Panc1 (cell line): ENCODE measurements at regions of chr22 and their contacts with region 1.

Region 1: DNA sequence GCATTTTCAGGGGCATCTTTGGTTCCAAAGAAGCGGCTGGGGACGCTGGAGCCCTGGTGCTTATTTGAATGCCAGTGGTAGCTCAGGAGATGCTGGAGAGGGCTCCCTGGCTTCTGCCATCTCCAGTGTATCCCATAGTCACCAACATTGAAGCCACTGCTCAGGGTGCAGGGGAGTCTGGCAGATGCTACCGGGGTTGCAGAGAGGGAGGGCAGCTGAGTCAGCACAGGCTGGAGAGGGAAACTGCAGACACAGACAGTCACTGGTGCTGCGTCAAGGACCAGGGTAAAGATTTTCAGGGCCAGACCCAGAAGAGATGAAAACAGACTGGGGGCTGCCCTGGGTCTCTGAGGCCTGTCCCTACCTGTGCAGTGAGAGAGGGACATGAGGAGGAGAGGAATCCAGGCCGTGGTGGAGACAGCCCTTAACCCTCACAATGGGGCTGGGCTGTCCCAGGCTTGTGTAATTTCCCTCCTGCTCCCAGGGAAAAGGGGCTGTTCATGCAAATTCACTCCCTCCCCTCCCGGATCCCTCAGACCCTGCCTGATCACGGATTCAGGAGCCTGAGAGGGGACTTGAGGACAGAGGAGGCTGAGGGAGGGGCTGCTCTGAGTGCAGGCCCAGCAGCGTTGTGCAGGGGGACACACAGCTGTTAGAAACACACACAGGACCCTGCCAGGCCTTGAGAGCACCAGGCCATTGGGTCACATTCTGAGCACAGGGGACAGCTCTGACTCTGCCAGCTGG is 126.9 kb upstream of the GRK3 start:
- DNase-seq: no peak
- ATAC-seq: no peak; the same call in 1 of the 2 replicates
- H3K4me3 ChIP-seq: no peak overlapping the region
- H3K27ac ChIP-seq: no peak overlapping the region
- H3K4me1 ChIP-seq: no peaks in the 10 kb centered on the region
- H3K27me3 ChIP-seq: no peaks in the 10 kb centered on the region
- CTCF ChIP-seq: no peak

Region 2: DNA sequence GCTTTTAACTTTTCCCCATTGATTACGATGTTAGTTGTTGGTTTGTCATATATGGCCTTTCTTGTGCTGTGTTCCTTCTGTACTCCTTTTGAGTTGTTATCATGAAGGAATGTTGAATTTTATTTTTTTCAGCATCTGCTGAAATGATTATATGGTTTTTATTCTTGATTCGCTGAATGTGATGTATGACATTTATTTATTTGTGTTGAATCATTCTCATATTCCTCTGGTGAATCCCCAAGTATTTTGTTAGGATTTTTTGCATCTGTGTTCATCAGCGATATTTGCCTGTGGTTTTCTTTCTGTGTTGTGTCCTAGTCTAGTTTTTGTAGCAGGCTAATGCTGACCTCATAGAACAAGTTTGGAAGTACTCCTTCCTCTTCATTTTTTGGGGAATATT is 756.4 kb before region 1 on chr22:
- CTCF ChIA-PET with region 1: no interaction called
- POLR2A ChIA-PET with region 1: no interaction called
- in situ Hi-C with region 1: no loop called
- intact Hi-C with region 1: no loop called
- DNase-seq: no peak
- ATAC-seq: no peak
- H3K4me3 ChIP-seq: no peak overlapping the region
- H3K27ac ChIP-seq: no peak overlapping the region
- H3K4me1 ChIP-seq: no peaks in the 10 kb centered on the region
- H3K27me3 ChIP-seq: no peaks in the 10 kb centered on the region
- CTCF ChIP-seq: no peak

Region 3: GRCh38 chr22:25525376-25525775 is 87.8 kb after region 1 on chr22:
- CTCF ChIA-PET with region 1: no interaction called
- POLR2A ChIA-PET with region 1: no interaction called
- in situ Hi-C with region 1: no loop called
- intact Hi-C with region 1: no loop called
- DNase-seq: no peak
- ATAC-seq: no peak
- H3K4me3 ChIP-seq: no peak overlapping the region
- H3K27ac ChIP-seq: no peak overlapping the region
- H3K4me1 ChIP-seq: no peaks in the 10 kb centered on the region
- H3K27me3 ChIP-seq: no peaks in the 10 kb centered on the region
- CTCF ChIP-seq: no peak

Region 4: GRCh38 chr22:25764270-25765015 is 326.9 kb after region 1 on chr22:
- CTCF ChIA-PET with region 1: interaction called, 15 read pairs
- POLR2A ChIA-PET with region 1: no interaction called
- in situ Hi-C with region 1: no loop called
- intact Hi-C with region 1: no loop called
- DNase-seq: no peak
- ATAC-seq: no peak
- H3K4me3 ChIP-seq: no peak overlapping the region
- H3K27ac ChIP-seq: no peak overlapping the region
- H3K4me1 ChIP-seq: no peaks in the 10 kb centered on the region
- H3K27me3 ChIP-seq: no peaks in the 10 kb centered on the region
- CTCF ChIP-seq: no peak

Region 5: DNA sequence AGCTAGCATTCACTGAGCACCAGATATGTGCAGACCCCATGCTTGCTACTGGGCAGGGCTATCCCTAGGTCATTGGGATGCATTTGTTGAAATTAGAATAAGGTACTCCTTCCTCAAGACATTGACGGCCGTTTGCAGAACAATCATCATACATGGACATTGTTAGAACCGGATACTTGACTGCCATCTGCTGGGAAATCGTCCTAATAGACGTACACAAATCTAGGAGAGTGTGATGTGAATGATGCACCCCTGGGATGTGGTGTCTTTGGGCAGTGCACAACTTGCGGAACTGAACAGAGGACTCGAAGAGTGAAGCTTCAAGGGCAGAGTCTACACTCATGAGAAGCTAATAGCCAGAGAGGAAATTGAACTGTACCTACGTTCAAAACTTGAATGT is 340.3 kb after region 1 on chr22:
- CTCF ChIA-PET with region 1: interaction called, 15 read pairs
- POLR2A ChIA-PET with region 1: no interaction called
- in situ Hi-C with region 1: no loop called
- intact Hi-C with region 1: no loop called
- DNase-seq: peak; percentile 18
- ATAC-seq: peak; percentile 78; the same call in 1 of the 2 replicates
- H3K4me3 ChIP-seq: no peak overlapping the region
- H3K27ac ChIP-seq: no peak overlapping the region
- H3K4me1 ChIP-seq: no peaks in the 10 kb centered on the region
- H3K27me3 ChIP-seq: no peaks in the 10 kb centered on the region
- CTCF ChIP-seq: peak; percentile 59